PC-3 (cell line): ENCODE measurements at regions of chr7 and their contacts with region 1.

Region 1: GRCh38 chr7:54888067-54888733 is 129.2 kb upstream of the SEC61G start:
- DNase-seq: no peak
- ATAC-seq: peak; percentile 18
- H3K4me3 ChIP-seq: no peak overlapping the region
- H3K27ac ChIP-seq: no peak overlapping the region
- H3K4me1 ChIP-seq: 0 out of 2 replicates have a peak, but pooled peaks cover 5% of the 10 kb centered on the region
- H3K27me3 ChIP-seq: no peaks in the 10 kb centered on the region
- CTCF ChIP-seq: no peak

Region 2: GRCh38 chr7:54615537-54615936 is 272.7 kb before region 1 on chr7:
- CTCF ChIA-PET with region 1: no interaction called
- POLR2A ChIA-PET with region 1: no interaction called
- intact Hi-C with region 1: no loop called
- DNase-seq: peak; percentile 15
- ATAC-seq: no peak
- H3K4me3 ChIP-seq: no peak overlapping the region
- H3K27ac ChIP-seq: no peak overlapping the region
- H3K4me1 ChIP-seq: no peaks in the 10 kb centered on the region
- H3K27me3 ChIP-seq: no peaks in the 10 kb centered on the region
- CTCF ChIP-seq: no peak

Region 3: GRCh38 chr7:54904130-54904529 is 15.9 kb after region 1 on chr7:
- CTCF ChIA-PET with region 1: interaction called, 10 read pairs
- POLR2A ChIA-PET with region 1: no interaction called
- intact Hi-C with region 1: no loop called
- DNase-seq: no peak
- ATAC-seq: no peak
- H3K4me3 ChIP-seq: no peak overlapping the region
- H3K27ac ChIP-seq: no peak overlapping the region
- H3K4me1 ChIP-seq: peaks cover 16% of the 10 kb centered on the region
- H3K27me3 ChIP-seq: no peaks in the 10 kb centered on the region
- CTCF ChIP-seq: no peak

Region 4: DNA sequence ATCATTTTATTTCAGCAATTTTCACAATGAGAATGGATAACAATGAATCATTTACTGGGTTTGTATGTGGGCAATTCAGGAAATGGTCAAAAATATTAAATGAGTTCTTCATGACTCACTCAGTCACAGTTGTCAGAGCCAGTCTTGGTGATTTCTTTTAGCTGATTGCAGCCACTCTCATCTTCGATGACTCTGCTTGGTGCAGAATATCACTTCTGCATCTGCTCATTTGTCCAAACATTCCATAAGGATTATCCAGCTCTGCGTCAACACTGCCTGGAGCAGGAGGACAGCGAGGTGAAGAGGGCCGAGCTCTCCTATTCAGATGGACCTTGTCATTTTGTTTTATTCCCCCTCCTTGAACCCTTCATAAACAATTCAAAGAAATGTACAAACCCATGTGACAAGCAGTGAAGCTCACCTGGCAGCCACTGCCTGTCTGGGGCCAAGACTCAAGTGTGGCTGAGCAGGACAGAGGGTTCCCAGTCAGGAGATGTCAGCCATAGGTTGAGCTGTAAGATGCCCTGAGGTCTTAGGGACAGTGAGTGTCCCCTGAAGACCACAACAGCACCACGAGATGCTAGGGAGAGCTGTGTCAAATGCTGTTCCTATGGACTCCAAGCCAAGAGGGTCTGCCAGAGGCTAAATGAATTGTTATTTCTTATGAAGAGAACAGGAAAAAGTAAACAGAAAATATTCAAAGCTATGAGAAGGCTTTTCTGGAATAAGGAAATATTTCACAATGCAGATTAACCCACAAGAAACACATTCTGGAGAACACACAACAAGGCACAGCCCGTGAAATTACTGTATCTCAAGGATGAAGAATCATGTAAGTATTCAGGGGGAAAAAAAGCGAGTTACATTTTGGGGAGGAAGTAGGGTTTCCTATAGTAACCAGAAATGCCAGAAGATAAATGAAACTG is 97.5 kb after region 1 on chr7:
- CTCF ChIA-PET with region 1: no interaction called
- POLR2A ChIA-PET with region 1: no interaction called
- intact Hi-C with region 1: loop called (anchors 2 kb)
- DNase-seq: peak; percentile 96
- ATAC-seq: peak; percentile 97
- H3K4me3 ChIP-seq: peak overlapping the region; percentile 21
- H3K27ac ChIP-seq: peak overlapping the region; percentile 93
- H3K4me1 ChIP-seq: peaks cover 38% of the 10 kb centered on the region
- H3K27me3 ChIP-seq: no peaks in the 10 kb centered on the region
- CTCF ChIP-seq: no peak